ENCODE measurements at regions of chr7 and their contacts with region 1.

Region 1: DNA sequence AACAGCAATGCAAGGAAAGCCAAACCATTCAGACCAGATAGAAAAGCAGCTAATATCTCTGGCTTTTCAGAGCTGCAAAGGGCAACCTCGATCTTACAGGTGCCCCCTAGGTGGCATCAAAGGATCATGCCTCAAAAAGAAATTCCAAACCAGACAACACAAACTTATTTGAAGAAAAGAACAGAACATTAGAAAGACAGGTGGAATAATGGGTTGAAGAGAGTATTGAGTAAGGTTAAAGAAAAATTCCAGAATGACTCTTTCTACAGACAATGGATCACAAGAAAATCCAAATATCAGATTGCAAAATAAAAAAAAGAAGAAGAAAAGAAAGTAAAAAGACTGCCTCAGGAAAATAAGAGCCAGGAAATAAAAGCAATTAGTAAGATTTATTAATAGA is 213.7 kb downstream of the ELMO1 start:
- DNase-seq: no peak
- ATAC-seq: peak; percentile 80
- H3K4me3 Mint-ChIP-seq: no peak overlapping the region
- H3K27ac Mint-ChIP-seq: peak overlapping the region; percentile 6; the same call in 1 of the 2 replicates
- H3K4me1 Mint-ChIP-seq: peaks cover 11% of the 10 kb centered on the region
- H3K27me3 Mint-ChIP-seq: no peaks in the 10 kb centered on the region; the same call in 1 of the 2 replicates
- CTCF ChIP-seq: no peak; the same call in 1 of the 2 replicates

Region 2: GRCh38 chr7:37269711-37270508 is 35.0 kb after region 1 on chr7:
- CTCF ChIA-PET with region 1: interaction called, 16 read pairs
- POLR2A ChIA-PET with region 1: no interaction called
- DNase-seq: no peak
- ATAC-seq: no peak
- H3K4me3 Mint-ChIP-seq: no peak overlapping the region
- H3K27ac Mint-ChIP-seq: 0 out of 2 replicates have a peak overlapping the region, but pooled peaks have one; percentile 54
- H3K4me1 Mint-ChIP-seq: peaks cover 9% of the 10 kb centered on the region
- H3K27me3 Mint-ChIP-seq: no peaks in the 10 kb centered on the region
- CTCF ChIP-seq: no peak

Region 3: GRCh38 chr7:37352974-37353948 is 118.3 kb after region 1 on chr7:
- CTCF ChIA-PET with region 1: interaction called, 26 read pairs
- POLR2A ChIA-PET with region 1: no interaction called
- DNase-seq: peak; percentile 42
- ATAC-seq: peak; percentile 84
- H3K4me3 Mint-ChIP-seq: no peak overlapping the region
- H3K27ac Mint-ChIP-seq: peak overlapping the region; percentile 92
- H3K4me1 Mint-ChIP-seq: peaks cover 31% of the 10 kb centered on the region
- H3K27me3 Mint-ChIP-seq: no peaks in the 10 kb centered on the region
- CTCF ChIP-seq: peak; percentile 24; the same call in 1 of the 2 replicates

Region 4: DNA sequence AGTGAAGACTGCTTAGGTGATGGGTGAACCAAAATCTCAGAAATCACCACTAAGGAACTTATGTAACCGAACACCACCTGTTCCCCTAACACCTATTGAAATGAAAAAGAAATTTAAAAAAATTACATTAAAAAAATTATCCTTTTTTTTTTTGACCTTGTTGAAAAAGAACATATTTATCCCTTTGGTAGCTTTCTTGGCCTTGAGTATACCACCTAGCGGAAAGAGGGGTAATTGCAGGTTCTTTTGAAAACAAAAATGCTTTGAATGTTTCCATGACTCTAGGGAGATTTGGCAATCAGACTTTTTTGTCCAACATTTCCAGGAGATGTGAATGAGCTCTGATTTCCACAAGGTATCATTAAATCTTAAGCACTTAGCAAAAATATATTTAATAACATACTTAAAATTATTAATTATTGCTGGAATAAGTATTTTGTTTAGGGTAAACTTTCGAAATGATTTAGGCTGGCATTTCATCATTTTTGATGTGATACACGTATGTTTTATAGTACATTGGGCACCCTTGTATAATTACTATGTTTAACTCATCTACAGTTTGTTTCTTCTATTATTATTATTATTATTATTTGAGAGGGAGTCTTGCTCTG is 260.8 kb after region 1 on chr7:
- CTCF ChIA-PET with region 1: interaction called, 64 read pairs
- POLR2A ChIA-PET with region 1: no interaction called
- DNase-seq: no peak
- ATAC-seq: no peak
- H3K4me3 Mint-ChIP-seq: peak overlapping the region; percentile 66; the same call in 1 of the 2 replicates
- H3K27ac Mint-ChIP-seq: no peak overlapping the region
- H3K4me1 Mint-ChIP-seq: peaks cover 40% of the 10 kb centered on the region
- H3K27me3 Mint-ChIP-seq: no peaks in the 10 kb centered on the region
- CTCF ChIP-seq: peak; percentile 62

Region 5: GRCh38 chr7:37833107-37833817 is 598.3 kb after region 1 on chr7:
- CTCF ChIA-PET with region 1: interaction called, 14 read pairs
- POLR2A ChIA-PET with region 1: no interaction called
- DNase-seq: peak; percentile 43
- ATAC-seq: peak; percentile 52; the same call in 1 of the 2 replicates
- H3K4me3 Mint-ChIP-seq: peak overlapping the region; percentile 43
- H3K27ac Mint-ChIP-seq: no peak overlapping the region
- H3K4me1 Mint-ChIP-seq: peaks cover 4% of the 10 kb centered on the region; the same call in 1 of the 2 replicates
- H3K27me3 Mint-ChIP-seq: no peaks in the 10 kb centered on the region
- CTCF ChIP-seq: peak; percentile 71